T-cell (primary cell): ENCODE measurements at regions of chr4 and their contacts with region 1.

Region 1: DNA sequence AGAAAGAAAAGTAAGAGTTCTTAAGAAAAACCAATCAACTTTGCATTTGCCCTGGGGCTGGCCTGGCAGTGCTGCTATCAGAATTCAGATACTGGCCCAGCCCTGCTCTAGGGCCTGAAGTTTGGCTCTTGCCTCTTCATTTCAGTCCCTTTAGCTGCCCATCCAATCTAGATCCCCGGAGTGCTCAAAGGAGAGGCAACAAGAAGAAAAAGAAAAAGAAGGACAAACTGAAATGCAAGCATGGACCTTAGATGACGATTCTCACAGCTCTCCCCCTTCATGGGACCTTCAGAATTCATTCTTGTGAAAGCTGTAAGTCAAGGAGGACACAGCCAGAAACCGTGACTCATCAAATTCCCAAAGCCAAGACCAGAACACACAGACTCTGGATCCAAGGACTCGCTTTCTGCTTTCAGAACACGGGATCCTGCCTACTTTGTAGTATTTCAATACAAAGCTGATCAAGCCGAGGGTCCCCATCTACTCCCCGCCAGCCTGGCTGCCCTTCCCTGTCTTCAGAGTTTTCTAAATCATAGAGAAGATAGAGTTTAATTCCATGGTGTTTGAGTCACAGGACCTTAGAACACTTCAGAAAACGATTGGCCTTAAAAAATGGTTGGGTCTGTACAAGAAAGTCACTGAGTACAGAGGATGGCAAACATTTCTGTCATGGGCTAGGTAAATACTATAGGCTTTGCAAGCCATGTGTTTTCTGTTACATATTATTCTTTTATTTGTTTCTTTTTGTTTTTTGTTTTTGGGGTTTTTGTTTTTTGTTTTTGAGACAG is 103.7 kb downstream of the RBM47 start:
- DNase-seq: no peak
- ATAC-seq: no peak
- H3K4me3 ChIP-seq: no peak overlapping the region
- H3K4me3 Mint-ChIP-seq: no peak overlapping the region
- H3K27ac ChIP-seq: no peak overlapping the region
- H3K27ac Mint-ChIP-seq: no peak overlapping the region
- H3K4me1 ChIP-seq: no peaks in the 10 kb centered on the region
- H3K4me1 Mint-ChIP-seq: peaks cover 0 to under 1% (median 0%) of the 10 kb centered on the region in 3 donors
- H3K27me3 ChIP-seq: peaks cover 0 to 3% of the 10 kb centered on the region in 2 experiments
- H3K27me3 Mint-ChIP-seq: no peaks in the 10 kb centered on the region

Region 2: DNA sequence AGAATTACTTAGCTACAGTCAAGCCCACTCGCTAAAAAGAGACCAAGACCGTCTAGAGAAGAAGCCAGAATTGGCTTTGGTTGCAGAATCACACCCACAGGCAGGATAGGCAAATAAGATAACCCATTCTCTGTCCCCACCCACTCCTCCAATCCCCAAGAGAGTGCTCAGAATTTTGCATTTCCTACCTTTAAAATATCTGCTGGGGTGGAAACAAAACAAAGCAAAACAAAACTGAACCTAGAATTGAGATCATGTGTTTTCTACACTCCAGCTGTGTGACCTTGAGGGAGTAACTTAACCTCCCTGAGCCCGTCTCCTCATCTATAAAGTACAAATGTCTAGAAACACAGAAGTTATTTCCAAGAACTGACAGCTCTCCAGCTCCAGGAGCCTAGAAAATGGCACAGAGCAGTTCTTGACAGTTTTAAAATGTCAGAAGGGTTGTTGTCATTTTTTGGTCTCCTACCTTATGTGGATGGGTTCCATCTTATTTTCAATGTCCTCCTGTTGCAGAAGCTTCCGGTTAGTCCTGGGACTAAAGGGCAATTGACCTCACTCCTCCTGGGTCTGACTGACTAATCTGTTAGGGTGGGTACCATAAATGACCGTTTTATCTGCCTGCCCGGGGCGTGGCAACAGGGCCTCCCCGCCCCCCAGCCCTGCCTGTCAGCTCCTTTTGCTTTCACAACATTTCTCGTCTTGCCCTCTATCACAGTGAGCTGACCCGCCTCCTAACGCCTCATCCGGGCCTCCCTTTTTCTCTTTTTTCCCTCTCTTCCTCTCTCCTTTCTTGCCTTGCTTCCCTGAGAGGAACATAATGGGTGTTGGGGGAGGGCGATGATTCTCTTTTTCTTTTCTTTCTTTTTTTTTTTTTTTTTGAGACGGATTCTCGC is 10.4 kb before region 1 on chr4:
- CTCF ChIA-PET with region 1: no interaction called
- POLR2A ChIA-PET with region 1: no interaction called
- DNase-seq: no peak
- ATAC-seq: peak in 1 of 4 experiments; percentile 26
- H3K4me3 ChIP-seq: no peak overlapping the region
- H3K4me3 Mint-ChIP-seq: no peak overlapping the region
- H3K27ac ChIP-seq: no peak overlapping the region
- H3K27ac Mint-ChIP-seq: no peak overlapping the region
- H3K4me1 ChIP-seq: no peaks in the 10 kb centered on the region
- H3K4me1 Mint-ChIP-seq: peaks cover 8 to 16% (median 12%) of the 10 kb centered on the region in 3 donors
- H3K27me3 ChIP-seq: peaks cover 0 to 2% of the 10 kb centered on the region in 2 experiments
- H3K27me3 Mint-ChIP-seq: no peaks in the 10 kb centered on the region

Region 3: DNA sequence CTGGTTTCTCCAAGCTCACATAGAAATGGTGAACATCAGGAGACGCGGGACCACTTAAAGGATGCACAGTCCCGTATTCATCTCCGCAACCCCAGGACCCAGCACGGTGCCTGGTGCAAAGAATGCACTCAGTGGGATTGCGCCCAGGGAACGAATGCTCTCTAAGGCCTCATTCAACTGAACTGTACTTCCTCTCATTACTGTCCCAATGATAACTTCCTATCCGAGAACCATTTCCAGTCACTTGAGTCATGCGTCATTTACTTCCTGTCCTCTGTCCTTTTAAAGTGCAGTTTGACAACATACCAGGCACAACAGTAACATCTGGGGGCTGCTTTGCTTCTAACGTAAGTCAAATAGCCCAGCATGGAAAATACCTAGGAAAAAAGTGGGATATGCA is 28.0 kb after region 1 on chr4:
- CTCF ChIA-PET with region 1: no interaction called
- POLR2A ChIA-PET with region 1: interaction called in 1 of 2 experiments, 11 read pairs
- DNase-seq: no peak
- ATAC-seq: no peak
- H3K4me3 ChIP-seq: no peak overlapping the region
- H3K4me3 Mint-ChIP-seq: no peak overlapping the region
- H3K27ac ChIP-seq: no peak overlapping the region
- H3K27ac Mint-ChIP-seq: no peak overlapping the region
- H3K4me1 ChIP-seq: peaks cover 3 to 7% of the 10 kb centered on the region in 2 experiments
- H3K4me1 Mint-ChIP-seq: peaks cover 14 to 20% (median 18%) of the 10 kb centered on the region in 3 donors
- H3K27me3 ChIP-seq: no peaks in the 10 kb centered on the region
- H3K27me3 Mint-ChIP-seq: no peaks in the 10 kb centered on the region